GM10248 (cell line): ENCODE measurements at regions of chr6 and their contacts with region 1.

Region 1: DNA sequence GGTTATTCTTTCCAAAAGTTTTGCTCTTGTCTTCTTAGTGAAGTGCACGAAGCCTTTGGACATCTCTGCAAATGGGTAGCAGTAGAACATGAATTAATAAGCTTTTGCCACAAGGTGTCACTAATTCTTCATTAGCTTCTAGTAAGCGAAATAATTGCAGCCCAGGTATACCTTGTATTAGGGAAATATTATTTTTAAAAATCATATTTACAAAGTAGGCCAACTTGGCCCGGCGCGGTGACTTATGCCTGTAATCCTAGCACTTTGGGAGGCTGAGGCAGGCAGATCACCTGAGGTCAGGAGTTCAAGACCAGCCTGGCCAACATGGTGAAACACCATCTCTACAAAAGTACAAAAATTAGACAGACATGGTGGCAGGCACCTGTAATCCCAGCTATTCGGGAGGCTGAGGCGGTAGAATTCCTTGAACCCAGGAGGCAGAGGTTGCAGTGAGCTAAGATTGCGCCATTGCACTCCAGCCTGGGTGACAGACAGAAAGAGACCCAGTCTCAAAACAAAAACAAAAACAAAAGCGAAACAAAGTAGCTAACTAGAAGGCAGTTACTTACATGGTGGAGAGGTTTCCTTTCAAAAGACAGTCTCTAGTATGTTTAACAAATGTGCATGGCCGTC is 8.8 kb upstream of the RSPH3 start:
- DNase-seq: peak; percentile 61
- CTCF ChIP-seq: peak; percentile 59

Region 2: GRCh38 chr6:159033160-159034049 is 24.6 kb after region 1 on chr6:
- CTCF ChIA-PET with region 1: interaction called, 26 read pairs
- POLR2A ChIA-PET with region 1: no interaction called
- DNase-seq: no peak
- CTCF ChIP-seq: no peak

Region 3: DNA sequence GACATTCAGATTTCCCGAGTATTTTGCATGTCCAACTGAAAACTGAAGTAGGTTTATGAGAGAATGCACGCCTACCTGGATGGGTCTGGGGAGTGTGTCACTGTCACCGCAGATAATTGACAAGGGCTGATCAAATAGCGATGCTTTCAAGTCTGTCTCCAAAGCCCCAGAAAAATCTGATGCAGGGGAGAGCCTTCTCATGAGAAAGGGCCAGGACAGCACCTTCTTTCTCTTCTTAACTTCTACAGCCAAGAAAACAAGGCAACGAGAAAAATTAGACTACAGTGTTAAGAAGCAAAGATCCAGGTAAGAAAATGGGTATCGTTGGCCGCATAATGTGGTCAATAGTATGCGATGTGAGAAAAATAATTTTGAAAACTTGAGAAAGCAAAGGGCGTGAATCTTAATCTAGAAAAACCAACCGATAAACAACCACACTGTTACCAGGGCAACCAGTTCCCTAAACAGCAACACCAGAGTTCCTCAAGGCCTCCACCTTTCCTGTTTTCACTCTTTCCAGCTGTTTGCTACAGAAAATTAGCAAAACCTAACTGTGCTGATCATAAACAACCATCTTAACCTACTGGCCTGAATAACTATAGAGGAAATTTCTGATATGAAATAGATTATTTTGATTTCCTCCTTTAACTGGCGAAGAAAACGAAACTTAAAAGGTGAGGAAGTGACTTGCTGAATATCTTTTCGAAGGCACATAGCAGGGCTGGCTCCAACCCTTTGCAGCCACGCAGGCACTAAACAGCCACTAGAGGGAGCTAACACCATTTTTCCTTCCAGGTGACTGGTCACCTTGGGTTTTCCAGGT is 33.4 kb after region 1 on chr6:
- CTCF ChIA-PET with region 1: interaction called, 24 read pairs
- POLR2A ChIA-PET with region 1: interaction called, 9 read pairs
- DNase-seq: peak; percentile 62
- CTCF ChIP-seq: peak; percentile 98

Region 4: DNA sequence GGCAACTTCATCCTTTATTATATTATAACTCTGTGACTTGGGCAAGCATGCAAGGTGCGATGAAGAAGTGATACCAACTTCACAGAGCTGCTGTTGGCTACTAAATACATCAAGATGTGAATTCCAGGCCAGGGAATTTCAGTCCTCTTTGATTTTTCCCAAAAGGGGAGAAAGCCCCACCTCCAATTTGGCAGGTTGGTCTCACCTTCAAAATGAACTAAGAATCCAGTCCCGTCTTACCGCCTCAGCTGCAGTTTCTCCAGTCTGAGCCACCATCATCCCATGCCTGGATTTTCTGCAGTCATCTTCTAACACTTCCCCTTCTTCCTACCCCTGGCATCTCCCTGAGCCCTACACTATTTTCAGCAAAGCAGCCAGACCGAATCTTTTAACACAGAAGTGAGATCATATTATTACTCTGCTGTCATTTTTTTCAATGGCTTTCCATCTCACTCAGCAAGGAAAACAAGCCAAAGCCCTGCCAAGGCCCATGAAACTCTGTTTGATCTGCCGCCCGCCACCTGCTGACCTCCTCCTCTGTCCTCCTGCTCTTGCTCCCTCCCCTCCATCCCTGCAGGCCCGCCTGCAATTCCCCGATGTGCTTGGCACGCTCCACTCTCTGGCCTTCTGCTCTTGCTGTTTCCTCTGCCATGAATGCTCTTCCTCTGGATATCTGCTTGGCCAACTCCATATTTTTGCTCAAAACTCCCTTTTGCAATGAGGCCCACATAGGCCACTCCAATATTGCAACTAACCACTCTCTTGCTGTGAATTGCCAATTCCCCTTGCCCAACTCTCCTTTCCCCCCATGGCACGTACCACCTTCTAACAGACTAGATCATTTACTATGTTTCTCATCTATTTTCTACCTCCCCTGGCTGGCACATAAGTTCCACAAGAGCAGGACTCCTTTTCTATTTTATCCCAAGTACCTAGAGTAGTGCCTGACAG is 82.0 kb after region 1 on chr6:
- CTCF ChIA-PET with region 1: interaction called, 17 read pairs
- POLR2A ChIA-PET with region 1: no interaction called
- DNase-seq: no peak
- CTCF ChIP-seq: no peak

Region 5: DNA sequence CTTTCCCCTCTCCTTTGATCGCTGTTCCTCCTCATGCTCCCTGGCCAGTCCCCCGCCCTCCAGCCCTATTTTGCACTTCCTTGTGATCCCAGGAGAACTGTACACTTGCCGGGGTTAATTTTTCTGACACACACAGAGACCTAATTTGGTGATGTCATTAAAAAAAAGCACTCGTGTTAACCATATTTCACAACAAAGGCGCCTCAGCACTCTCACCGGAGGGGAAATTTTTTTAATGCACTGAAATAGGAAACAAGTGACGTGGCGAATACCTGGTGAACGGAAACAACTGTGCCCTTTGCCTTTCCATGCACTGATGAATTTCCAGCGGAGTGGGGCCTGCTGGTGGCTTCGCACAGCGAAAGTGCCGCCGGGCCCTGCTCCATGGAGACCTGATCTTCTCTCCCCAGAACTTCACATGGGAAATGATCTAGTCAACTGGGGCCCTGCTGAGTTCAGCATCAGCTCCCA is 89.9 kb after region 1 on chr6:
- CTCF ChIA-PET with region 1: interaction called, 208 read pairs
- POLR2A ChIA-PET with region 1: no interaction called
- DNase-seq: peak; percentile 48
- CTCF ChIP-seq: no peak

Region 6: GRCh38 chr6:159116343-159116742 is 107.6 kb after region 1 on chr6:
- CTCF ChIA-PET with region 1: interaction called, 31 read pairs
- POLR2A ChIA-PET with region 1: no interaction called
- DNase-seq: peak; percentile 50
- CTCF ChIP-seq: no peak

Region 7: GRCh38 chr6:159151266-159151855 is 142.6 kb after region 1 on chr6:
- CTCF ChIA-PET with region 1: interaction called, 10 read pairs
- POLR2A ChIA-PET with region 1: no interaction called
- DNase-seq: peak; percentile 59
- CTCF ChIP-seq: peak; percentile 68

Region 8: DNA sequence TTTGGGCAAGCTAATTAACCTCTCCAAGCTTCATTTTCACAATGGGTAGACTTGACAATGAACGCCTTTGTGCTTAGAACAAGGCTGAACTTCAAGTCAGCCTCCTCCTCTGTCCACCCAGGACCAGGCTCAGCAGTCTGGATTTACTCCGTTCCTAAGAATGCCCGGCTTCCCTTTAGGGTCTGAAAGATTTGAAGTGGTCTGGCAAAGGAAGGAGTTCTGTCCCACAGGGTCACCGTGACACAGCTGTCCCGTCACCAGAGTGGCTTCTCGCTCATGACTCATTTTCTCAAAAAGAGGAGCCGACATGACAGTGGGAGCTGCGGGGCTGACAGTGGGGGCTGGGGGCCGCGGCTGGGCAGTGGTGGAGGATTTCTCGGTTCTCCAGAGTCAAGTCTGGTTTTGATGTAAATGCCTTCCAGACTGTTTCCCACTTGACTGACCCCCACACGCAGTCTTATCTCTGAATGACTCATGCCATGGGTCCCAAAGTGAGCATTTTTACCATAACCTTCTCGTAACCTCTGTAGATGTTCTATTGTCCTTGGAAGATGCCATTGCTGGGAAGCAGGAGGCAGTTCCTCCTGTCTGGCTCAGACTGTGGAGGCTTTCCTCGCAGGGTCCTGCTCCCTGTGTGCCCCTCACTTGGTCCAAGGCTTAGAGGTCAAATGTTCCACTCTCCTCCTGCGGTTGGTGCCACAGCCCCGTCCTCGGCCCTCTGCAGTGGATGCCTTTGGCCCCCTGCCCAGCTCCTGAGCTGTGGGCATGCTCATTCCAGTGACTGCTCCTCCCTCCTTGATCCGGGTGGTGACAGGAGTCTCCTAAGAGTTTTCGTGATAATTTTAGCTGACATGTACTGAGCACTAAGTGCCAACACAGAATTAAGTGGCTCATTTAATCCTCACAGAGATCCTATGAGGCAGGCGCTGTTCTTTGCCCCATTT is 413.5 kb after region 1 on chr6:
- CTCF ChIA-PET with region 1: no interaction called
- POLR2A ChIA-PET with region 1: no interaction called
- DNase-seq: no peak
- CTCF ChIP-seq: no peak

Region 9: GRCh38 chr6:160069050-160069454 is 1060.3 kb after region 1 on chr6:
- CTCF ChIA-PET with region 1: no interaction called
- POLR2A ChIA-PET with region 1: no interaction called
- DNase-seq: peak; percentile 56
- CTCF ChIP-seq: no peak